ENCODE measurements at regions of chr15 and their contacts with region 1.

Region 1: DNA sequence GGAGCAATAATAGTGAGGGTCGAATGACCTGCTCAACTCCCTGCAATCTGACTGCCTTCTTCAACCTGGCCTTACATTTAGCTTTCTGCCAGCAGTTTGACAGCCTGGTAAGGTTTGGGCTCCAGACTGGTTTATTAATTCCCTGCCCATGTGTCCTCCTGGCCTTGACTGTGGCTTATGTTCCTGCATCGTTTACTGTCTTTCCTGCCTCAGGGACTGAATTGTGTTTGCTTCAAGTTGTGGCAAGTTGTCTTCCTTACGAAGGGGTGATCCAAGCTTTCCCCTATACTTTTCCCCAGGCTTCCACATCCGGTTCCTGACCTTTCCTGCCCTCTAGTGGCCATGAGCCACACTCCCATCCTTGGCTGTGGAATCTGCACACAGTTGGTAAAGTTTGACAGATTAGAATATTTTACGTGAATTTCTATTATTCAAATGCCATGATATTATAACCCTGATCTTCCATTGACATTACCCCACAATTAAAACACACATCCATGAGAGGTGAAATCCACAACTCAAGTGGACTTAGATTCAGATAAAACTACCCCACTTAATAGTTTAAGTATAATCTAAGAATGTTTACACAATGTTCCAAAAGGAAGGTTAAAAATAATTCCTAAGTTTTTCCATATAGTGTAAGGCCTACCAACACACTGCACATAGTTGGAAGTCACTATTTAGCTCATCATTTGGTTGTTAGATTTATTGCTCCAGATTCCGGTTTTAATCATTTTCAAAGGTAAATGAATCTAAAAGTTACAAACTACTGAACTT is 95.7 kb downstream of the NEDD4 start:
- DNase-seq: peak; percentile 87
- H3K4me3 Mint-ChIP-seq: peak overlapping the region; percentile 45
- H3K27ac Mint-ChIP-seq: peak overlapping the region; percentile 92
- H3K4me1 Mint-ChIP-seq: peaks cover 21% of the 10 kb centered on the region
- H3K27me3 Mint-ChIP-seq: no peaks in the 10 kb centered on the region
- CTCF ChIP-seq: peak; percentile 73

Region 2: DNA sequence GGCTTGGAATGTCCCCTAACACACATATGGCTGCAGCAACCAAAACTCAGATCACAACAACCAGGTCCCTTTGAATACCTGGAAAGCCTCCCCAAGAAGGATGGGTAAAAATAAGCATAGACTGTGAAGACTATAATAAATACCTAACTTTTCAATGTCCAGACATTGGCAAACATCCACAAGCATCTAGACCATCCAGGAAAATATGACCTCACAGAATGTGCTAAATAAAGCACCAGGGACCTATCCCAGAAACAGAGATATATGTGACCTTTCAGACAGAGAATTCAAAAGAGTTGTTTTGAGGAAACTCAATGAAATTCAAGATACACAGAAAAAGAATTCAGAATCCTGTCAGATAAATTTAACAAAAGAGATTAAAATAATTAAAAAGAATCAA is 13.5 kb before region 1 on chr15:
- CTCF ChIA-PET with region 1: interaction called, 14 read pairs
- POLR2A ChIA-PET with region 1: interaction called, 4 read pairs
- intact Hi-C with region 1: no loop called
- DNase-seq: no peak
- H3K4me3 Mint-ChIP-seq: no peak overlapping the region
- H3K27ac Mint-ChIP-seq: peak overlapping the region; percentile 17
- H3K4me1 Mint-ChIP-seq: peaks cover 12% of the 10 kb centered on the region
- H3K27me3 Mint-ChIP-seq: no peaks in the 10 kb centered on the region
- CTCF ChIP-seq: no peak

Region 3: GRCh38 chr15:55907797-55908196 is 10.0 kb after region 1 on chr15:
- CTCF ChIA-PET with region 1: interaction called, 28 read pairs
- POLR2A ChIA-PET with region 1: interaction called, 64 read pairs
- intact Hi-C with region 1: no loop called
- DNase-seq: peak; percentile 81
- H3K4me3 Mint-ChIP-seq: no peak overlapping the region
- H3K27ac Mint-ChIP-seq: peak overlapping the region; percentile 89
- H3K4me1 Mint-ChIP-seq: peaks cover 50% of the 10 kb centered on the region
- H3K27me3 Mint-ChIP-seq: no peaks in the 10 kb centered on the region
- CTCF ChIP-seq: no peak